B cell (primary cell): ENCODE measurements at regions of chr11 and their contacts with region 1.

Region 1: DNA sequence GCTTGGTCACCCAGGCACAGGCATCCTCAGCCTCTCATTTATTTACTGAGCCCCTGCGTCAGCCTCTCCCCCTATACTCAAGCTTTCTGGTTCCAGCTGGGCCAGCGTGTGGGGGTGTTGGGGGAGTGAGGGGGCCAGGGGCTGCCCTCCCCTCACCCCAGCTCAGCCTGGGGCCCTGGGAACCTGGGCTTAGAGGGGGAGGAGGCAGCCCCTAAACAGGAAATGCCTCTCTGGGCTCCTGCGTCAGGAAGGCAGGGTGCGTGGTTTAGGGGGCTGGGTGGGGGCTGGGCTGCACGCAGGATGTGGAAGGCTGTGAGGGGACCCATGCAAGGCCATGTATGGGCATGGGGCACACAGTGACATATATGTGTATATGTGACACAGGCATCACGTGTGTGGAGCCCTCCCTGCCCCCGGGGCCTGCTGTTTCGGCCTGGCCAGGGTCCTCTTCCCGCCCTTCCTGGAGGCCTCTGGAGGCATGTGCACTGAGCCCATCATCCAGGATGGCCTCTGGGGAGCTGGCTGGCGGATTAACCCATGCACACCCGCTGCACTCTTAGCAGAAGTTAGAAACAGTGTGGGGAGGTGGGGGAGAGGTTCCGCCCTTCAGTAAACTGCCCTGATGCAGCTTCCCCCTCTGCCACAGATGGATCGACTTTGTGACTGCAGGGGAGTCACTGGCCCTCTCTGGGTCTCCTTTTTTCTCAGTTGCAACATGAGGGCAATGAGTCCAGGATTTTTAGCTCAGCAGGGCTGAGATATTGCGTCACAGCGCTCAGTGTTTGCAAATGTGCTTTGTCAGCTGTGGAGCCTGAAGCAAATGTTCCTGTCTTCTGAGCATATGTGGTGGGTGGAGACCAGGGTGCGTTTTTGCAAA is 1.1 kb upstream of the CD248 start:
- DNase-seq: peak; percentile 89
- ATAC-seq: peak; percentile 74
- H3K4me3 ChIP-seq: peak overlapping the region in 4 of 5 experiments; percentile 6 to 51 (median 20)
- H3K4me3 Mint-ChIP-seq: peak overlapping the region; percentile 91
- H3K27ac ChIP-seq: peak overlapping the region; percentile 76 to 95
- H3K27ac Mint-ChIP-seq: peak overlapping the region; percentile 98
- H3K4me1 ChIP-seq: peaks cover 34 to 37% of the 10 kb centered on the region in 2 donors
- H3K4me1 Mint-ChIP-seq: peaks cover 42% of the 10 kb centered on the region
- H3K27me3 ChIP-seq: no peaks in the 10 kb centered on the region
- H3K27me3 Mint-ChIP-seq: no peaks in the 10 kb centered on the region
- CTCF ChIP-seq: no peak

Region 2: DNA sequence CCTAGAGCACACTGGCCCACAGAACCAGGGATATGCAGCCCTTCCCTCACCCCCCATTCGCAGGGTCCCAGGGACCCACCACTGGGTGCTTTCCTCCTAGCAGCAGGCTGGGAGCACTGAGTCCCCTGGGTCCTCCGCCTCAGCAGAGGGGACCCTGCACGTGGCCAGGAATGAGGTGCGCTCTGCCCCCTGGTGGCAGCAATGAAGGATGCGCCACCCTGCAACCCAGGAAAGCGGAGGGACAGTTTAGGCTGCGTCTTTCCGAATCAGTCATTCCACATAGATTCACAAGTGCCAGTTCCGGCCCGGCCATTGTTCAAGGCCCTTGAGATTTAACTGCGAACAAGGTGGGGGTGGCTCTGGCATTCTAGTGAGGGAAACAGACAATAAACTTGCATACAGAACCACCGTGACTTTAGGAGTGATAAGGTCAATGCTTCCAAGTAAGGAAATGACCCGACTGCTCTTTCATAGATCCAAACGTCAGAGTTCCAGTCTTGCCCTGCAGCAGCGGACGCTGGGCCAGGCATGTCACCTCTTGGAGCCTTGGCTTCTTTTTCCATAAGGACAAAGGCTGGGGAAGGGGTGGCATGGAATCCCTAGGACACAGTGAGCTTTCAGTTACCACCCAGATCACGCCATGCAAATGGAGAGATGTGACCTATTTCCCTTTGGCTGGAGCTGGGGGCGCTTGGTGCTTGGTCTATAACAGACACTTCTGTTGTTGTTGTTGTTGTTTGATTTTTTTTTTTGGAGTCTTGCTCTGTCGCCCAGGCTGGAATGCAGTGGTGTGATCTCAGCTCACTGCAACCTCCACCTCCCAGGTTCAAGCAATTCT is 10.6 kb after region 1 on chr11:
- CTCF ChIA-PET with region 1: interaction called, 101 read pairs
- POLR2A ChIA-PET with region 1: interaction called, 10 read pairs
- intact Hi-C with region 1: loop called (anchors 1 kb)
- DNase-seq: peak; percentile 89
- ATAC-seq: peak; percentile 98
- H3K4me3 ChIP-seq: peak overlapping the region in 1 of 5 experiments; percentile 30
- H3K4me3 Mint-ChIP-seq: peak overlapping the region; percentile 52
- H3K27ac ChIP-seq: no peak overlapping the region
- H3K27ac Mint-ChIP-seq: peak overlapping the region; percentile 47
- H3K4me1 ChIP-seq: peaks cover 15 to 25% of the 10 kb centered on the region in 2 donors
- H3K4me1 Mint-ChIP-seq: peaks cover 16% of the 10 kb centered on the region
- H3K27me3 ChIP-seq: no peaks in the 10 kb centered on the region
- H3K27me3 Mint-ChIP-seq: no peaks in the 10 kb centered on the region
- CTCF ChIP-seq: peak; percentile 93

Region 3: DNA sequence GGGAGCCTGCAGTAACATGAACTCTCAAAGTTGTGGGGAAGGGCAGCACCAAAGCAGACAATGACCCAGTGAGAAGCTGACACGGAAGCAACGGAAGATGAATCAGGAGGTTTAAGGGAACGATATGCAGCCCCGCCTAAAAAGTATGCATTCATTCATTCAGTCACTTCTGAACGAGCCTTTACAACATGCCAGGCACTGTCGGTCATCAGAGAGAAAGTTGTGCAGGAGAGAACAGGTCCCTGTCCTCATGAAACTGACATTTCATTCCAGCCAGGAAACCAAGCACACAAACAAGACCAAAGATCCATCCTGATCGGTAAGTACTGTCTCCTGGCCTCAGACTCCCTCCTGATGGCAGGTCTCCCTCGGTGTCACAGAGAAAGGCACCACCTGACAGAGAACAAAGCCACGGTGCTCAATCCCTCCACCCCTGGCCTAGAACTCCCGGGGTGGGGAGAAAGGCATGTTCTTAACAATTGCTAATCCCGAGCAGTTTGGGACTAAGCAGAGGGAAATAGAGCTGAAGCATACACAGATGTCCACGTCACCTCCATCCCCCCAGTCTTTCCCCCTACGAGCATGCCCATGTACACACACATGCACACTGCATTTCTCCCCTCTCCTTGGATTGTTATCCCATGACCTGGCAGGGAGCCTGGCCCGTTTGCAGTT is 588.2 kb after region 1 on chr11:
- CTCF ChIA-PET with region 1: no interaction called
- POLR2A ChIA-PET with region 1: no interaction called
- intact Hi-C with region 1: no loop called
- DNase-seq: no peak
- ATAC-seq: no peak
- H3K4me3 ChIP-seq: no peak overlapping the region
- H3K4me3 Mint-ChIP-seq: no peak overlapping the region
- H3K27ac ChIP-seq: no peak overlapping the region
- H3K27ac Mint-ChIP-seq: no peak overlapping the region
- H3K4me1 ChIP-seq: no peaks in the 10 kb centered on the region
- H3K4me1 Mint-ChIP-seq: no peaks in the 10 kb centered on the region
- H3K27me3 ChIP-seq: no peaks in the 10 kb centered on the region
- H3K27me3 Mint-ChIP-seq: peaks cover 29% of the 10 kb centered on the region
- CTCF ChIP-seq: no peak